CD8-positive, alpha-beta T cell (primary cell): ENCODE measurements at regions of chr12 and their contacts with region 1.

Region 1: GRCh38 chr12:47705566-47706425 is at the start of gene RPAP3:
- DNase-seq: peak; percentile 92 to 98 (median 97)
- ATAC-seq: peak; percentile 95
- H3K4me3 ChIP-seq: peak within 1 kb of the TSS; percentile 63 to 73
- H3K4me3 Mint-ChIP-seq: peak within 1 kb of the TSS; percentile 91
- H3K27ac ChIP-seq: peak within 1 kb of the TSS; percentile 67 to 88
- H3K27ac Mint-ChIP-seq: peak within 1 kb of the TSS; percentile 96
- H3K4me1 ChIP-seq: peaks cover 48% of the 10 kb centered on the region
- H3K4me1 Mint-ChIP-seq: peaks cover 64% of the 10 kb centered on the region
- H3K27me3 ChIP-seq: no peaks in the 10 kb centered on the region
- H3K27me3 Mint-ChIP-seq: no peaks in the 10 kb centered on the region
- CTCF ChIP-seq: peak; percentile 77
- total RNA-seq, gene RPAP3: 17.3 to 18.3 TPM

Region 2: GRCh38 chr12:47207340-47207717 is 498.5 kb before region 1 on chr12:
- CTCF ChIA-PET with region 1: interaction called, 3 read pairs
- POLR2A ChIA-PET with region 1: no interaction called
- intact Hi-C with region 1: loop called (anchors 10 kb)
- DNase-seq: peak in 5 of 9 experiments; percentile 38 to 78 (median 60)
- ATAC-seq: peak; percentile 40
- H3K4me3 ChIP-seq: peak overlapping the region; percentile 19 to 33
- H3K4me3 Mint-ChIP-seq: peak overlapping the region; percentile 71
- H3K27ac ChIP-seq: peak overlapping the region; percentile 8 to 80
- H3K27ac Mint-ChIP-seq: peak overlapping the region; percentile 92
- H3K4me1 ChIP-seq: peaks cover 75% of the 10 kb centered on the region
- H3K4me1 Mint-ChIP-seq: peaks cover 77% of the 10 kb centered on the region
- H3K27me3 ChIP-seq: no peaks in the 10 kb centered on the region
- H3K27me3 Mint-ChIP-seq: no peaks in the 10 kb centered on the region
- CTCF ChIP-seq: no peak

Region 3: DNA sequence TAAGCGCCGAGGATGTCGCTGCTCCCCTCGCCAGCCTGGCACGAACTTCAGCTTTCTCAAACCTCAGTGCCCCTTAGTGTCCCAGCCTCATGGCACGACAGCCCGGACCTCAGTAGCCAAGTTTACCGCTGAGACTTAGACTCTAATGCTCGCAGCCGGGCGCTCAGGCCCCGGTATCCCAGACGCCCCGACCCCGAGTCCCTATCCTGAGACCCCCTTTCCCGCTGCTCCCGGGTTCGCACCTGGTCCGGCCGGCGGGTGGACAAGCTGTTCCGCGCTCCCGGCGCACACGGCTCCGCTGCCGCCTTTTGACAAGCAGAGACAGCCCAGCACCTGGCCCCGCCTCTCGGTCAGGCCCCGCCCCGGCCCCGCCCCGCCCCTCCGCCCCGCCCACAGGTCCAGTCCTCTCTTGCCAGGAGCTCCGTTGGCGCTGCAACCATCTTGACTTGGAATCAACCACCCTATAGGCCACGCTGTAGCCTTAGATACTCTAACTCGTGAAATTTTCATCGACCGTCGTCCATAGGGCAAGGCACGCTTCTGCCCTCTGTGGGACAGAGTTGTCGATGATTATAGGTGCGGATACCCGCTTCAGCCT is 199.0 kb after region 1 on chr12 and contains the start of gene VDR:
- CTCF ChIA-PET with region 1: no interaction called
- POLR2A ChIA-PET with region 1: no interaction called
- intact Hi-C with region 1: loop called in 1 of 2 experiments (anchors 1 kb)
- DNase-seq: peak; percentile 39 to 78 (median 61)
- ATAC-seq: peak; percentile 75
- H3K4me3 ChIP-seq: peak within 1 kb of the TSS; percentile 68 to 70
- H3K4me3 Mint-ChIP-seq: peak within 1 kb of the TSS; percentile 86
- H3K27ac ChIP-seq: no peak within 1 kb of the TSS
- H3K27ac Mint-ChIP-seq: peak within 1 kb of the TSS; percentile 56
- H3K4me1 ChIP-seq: peaks cover 43% of the 10 kb centered on the region
- H3K4me1 Mint-ChIP-seq: peaks cover 43% of the 10 kb centered on the region
- H3K27me3 ChIP-seq: peaks cover 0 to 4% of the 10 kb centered on the region in 2 experiments
- H3K27me3 Mint-ChIP-seq: peaks cover 2% of the 10 kb centered on the region
- CTCF ChIP-seq: no peak
- total RNA-seq, gene VDR: 0.90 to 0.92 TPM

Region 4: DNA sequence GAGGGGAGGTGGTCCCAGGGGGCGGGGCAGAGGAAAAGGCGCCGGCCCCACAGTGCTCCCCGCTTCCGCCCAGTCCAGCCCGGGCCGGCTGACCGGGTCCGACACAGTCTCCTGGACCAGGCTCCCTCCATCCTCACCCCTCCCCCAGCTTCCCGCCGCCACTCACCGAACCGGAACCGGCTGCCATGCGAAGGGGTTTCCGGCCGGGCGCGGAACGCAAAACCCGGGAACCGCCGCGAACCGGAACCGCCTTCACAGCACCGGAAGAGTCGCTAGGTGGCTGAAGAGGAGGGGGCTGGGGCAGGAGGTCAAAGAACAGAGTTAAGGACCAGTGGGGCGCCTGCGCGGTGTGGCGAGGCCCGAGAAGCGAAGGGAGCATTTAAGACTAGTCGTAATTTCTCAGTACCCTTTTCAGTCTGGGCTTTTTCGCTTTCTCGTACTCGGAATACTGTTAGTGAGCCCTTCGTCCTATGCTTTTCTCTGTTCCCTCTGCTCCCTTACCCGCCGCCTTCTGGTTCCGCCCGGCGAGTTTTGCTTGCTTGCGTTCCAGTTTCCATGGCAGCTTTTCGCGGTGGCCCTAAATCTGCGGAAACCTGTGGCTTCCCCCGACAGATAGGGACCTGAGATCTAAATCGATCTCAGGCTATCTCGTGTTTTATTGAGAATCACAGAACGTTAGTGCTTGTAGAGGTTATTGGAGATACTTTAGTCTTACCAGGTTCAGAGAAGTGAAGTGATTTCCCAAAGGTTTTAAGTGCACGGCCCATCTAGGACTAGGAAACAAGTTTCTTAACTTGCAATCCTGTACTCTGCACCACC is 400.3 kb after region 1 on chr12 and contains the start of gene SENP1:
- CTCF ChIA-PET with region 1: no interaction called
- POLR2A ChIA-PET with region 1: no interaction called
- intact Hi-C with region 1: loop called (anchors 2 to 5 kb)
- DNase-seq: peak; percentile 82 to 95 (median 89)
- ATAC-seq: peak; percentile 78
- H3K4me3 ChIP-seq: peak within 1 kb of the TSS; percentile 81 to 89
- H3K4me3 Mint-ChIP-seq: peak within 1 kb of the TSS; percentile 88
- H3K27ac ChIP-seq: peak within 1 kb of the TSS; percentile 84 to 95
- H3K27ac Mint-ChIP-seq: peak within 1 kb of the TSS; percentile 94
- H3K4me1 ChIP-seq: peaks cover 21% of the 10 kb centered on the region
- H3K4me1 Mint-ChIP-seq: peaks cover 54% of the 10 kb centered on the region
- H3K27me3 ChIP-seq: no peaks in the 10 kb centered on the region
- H3K27me3 Mint-ChIP-seq: no peaks in the 10 kb centered on the region
- CTCF ChIP-seq: no peak
- total RNA-seq, gene SENP1: 24.4 to 24.6 TPM

Region 5: GRCh38 chr12:48350249-48351021 is 644.6 kb after region 1 on chr12 and contains the start of gene ZNF641:
- CTCF ChIA-PET with region 1: no interaction called
- POLR2A ChIA-PET with region 1: no interaction called
- intact Hi-C with region 1: loop called in 1 of 2 experiments (anchors 1 kb)
- DNase-seq: peak; percentile 54 to 93 (median 81)
- ATAC-seq: peak; percentile 87
- H3K4me3 ChIP-seq: peak within 1 kb of the TSS; percentile 86 to 88
- H3K4me3 Mint-ChIP-seq: peak within 1 kb of the TSS; percentile 92
- H3K27ac ChIP-seq: peak within 1 kb of the TSS; percentile 71 to 88
- H3K27ac Mint-ChIP-seq: peak within 1 kb of the TSS; percentile 95
- H3K4me1 ChIP-seq: peaks cover 26% of the 10 kb centered on the region
- H3K4me1 Mint-ChIP-seq: peaks cover 44% of the 10 kb centered on the region
- H3K27me3 ChIP-seq: no peaks in the 10 kb centered on the region
- H3K27me3 Mint-ChIP-seq: no peaks in the 10 kb centered on the region
- CTCF ChIP-seq: no peak
- total RNA-seq, gene ZNF641: 12.1 to 12.3 TPM

Region 6: GRCh38 chr12:49031553-49032162 is 1325.9 kb after region 1 on chr12:
- CTCF ChIA-PET with region 1: no interaction called
- POLR2A ChIA-PET with region 1: no interaction called
- intact Hi-C with region 1: no loop called
- DNase-seq: no peak
- ATAC-seq: no peak
- H3K4me3 ChIP-seq: no peak overlapping the region
- H3K4me3 Mint-ChIP-seq: no peak overlapping the region
- H3K27ac ChIP-seq: no peak overlapping the region
- H3K27ac Mint-ChIP-seq: no peak overlapping the region
- H3K4me1 ChIP-seq: no peaks in the 10 kb centered on the region
- H3K4me1 Mint-ChIP-seq: no peaks in the 10 kb centered on the region
- H3K27me3 ChIP-seq: no peaks in the 10 kb centered on the region
- H3K27me3 Mint-ChIP-seq: no peaks in the 10 kb centered on the region
- CTCF ChIP-seq: no peak